ENCODE measurements at regions of chr12 and their contacts with region 1.

Region 1: DNA sequence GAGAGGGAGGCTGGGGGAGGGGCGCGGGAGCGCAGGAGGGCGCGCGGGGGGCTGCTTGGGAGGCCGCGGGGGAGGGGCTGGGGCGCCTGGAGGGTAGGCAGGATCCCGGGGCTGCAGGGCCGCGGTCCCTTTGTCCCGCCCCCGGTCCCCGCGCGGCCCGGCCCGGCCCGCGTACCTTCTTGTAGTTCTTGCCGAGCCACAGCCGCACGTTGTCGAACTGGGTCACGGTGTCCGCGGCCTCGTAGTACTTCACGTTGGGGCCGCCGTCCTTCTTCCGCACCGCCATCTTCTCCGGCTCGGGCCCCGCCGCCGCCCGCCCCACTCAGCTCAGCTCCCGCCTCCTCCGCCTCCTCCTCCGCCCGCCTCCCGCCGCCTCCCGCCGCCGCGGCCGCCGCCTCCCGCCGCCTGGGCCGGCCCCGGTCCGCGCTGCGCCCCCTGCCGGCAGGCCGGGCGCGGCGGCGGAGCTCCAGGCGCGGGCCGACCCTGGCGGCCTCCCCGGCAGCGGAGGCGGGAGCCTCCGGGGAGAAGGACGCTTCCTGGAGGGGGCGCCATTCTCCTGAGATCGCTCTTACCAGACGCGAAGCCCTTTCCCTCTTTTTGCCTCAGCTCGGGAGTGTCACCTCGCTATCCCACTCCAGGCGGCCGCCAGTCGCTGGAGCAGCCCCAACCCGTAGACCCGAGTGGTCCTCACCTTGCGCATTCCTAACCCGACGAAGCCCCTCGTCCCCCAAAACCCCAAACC is at the start of gene SMARCC2:
- DNase-seq: peak; percentile 75 to 92
- H3K4me3 ChIP-seq: peak within 1 kb of the TSS; percentile 82 to 95 (median 90)
- H3K27ac ChIP-seq: peak within 1 kb of the TSS; percentile 81
- H3K4me1 ChIP-seq: peaks cover 2 to 8% (median 4%) of the 10 kb centered on the region in 4 experiments; a peak in 3 of 7 replicates
- H3K27me3 ChIP-seq: no peaks in the 10 kb centered on the region
- CTCF ChIP-seq: peak; percentile 75 to 96 (median 84)
- EP300 ChIP-seq: peak in 1 of 2 experiments; percentile 26; a peak in 1 of 3 replicates
- POLR2A ChIP-seq: peak; percentile 24 to 65
- RAD21 ChIP-seq: peak; percentile 26 to 48; a peak in 3 of 4 replicates
- total RNA-seq, gene SMARCC2: 66.3 and 78.5 TPM in 2 replicates

Region 2: GRCh38 chr12:56104109-56104814 is 85.1 kb before region 1 on chr12 and contains the start of gene PA2G4:
- CTCF ChIA-PET with region 1: interaction called, 9 read pairs
- POLR2A ChIA-PET with region 1: interaction called, 20 read pairs
- DNase-seq: peak; percentile 95 to 99
- H3K4me3 ChIP-seq: peak within 1 kb of the TSS; percentile 81 to 95 (median 92)
- H3K27ac ChIP-seq: peak within 1 kb of the TSS; percentile 88; the same call in 1 of the 2 replicates
- H3K4me1 ChIP-seq: peaks cover 0 to 9% (median 3%) of the 10 kb centered on the region in 4 experiments; a peak in 5 of 7 replicates
- H3K27me3 ChIP-seq: no peaks in the 10 kb centered on the region
- CTCF ChIP-seq: no peak
- EP300 ChIP-seq: no peak
- POLR2A ChIP-seq: peak; percentile 69 to 70; a peak in 2 of 3 replicates
- RAD21 ChIP-seq: no peak
- total RNA-seq, gene PA2G4: 237 and 242 TPM in 2 replicates

Region 3: GRCh38 chr12:56178347-56178746 is 11.0 kb before region 1 on chr12:
- CTCF ChIA-PET with region 1: interaction called, 11 read pairs
- POLR2A ChIA-PET with region 1: interaction called, 189 read pairs
- DNase-seq: no peak
- H3K4me3 ChIP-seq: no peak overlapping the region
- H3K27ac ChIP-seq: no peak overlapping the region
- H3K4me1 ChIP-seq: no peaks in the 10 kb centered on the region
- H3K27me3 ChIP-seq: no peaks in the 10 kb centered on the region
- CTCF ChIP-seq: no peak
- EP300 ChIP-seq: no peak
- POLR2A ChIP-seq: no peak; a peak in 1 of 3 replicates
- RAD21 ChIP-seq: no peak

Region 4: GRCh38 chr12:56230432-56231183 is 41.3 kb after region 1 on chr12:
- CTCF ChIA-PET with region 1: interaction called, 6 read pairs
- POLR2A ChIA-PET with region 1: interaction called, 11 read pairs
- DNase-seq: no peak
- H3K4me3 ChIP-seq: no peak overlapping the region
- H3K27ac ChIP-seq: no peak overlapping the region
- H3K4me1 ChIP-seq: peaks cover 0 to 6% (median 0%) of the 10 kb centered on the region in 4 experiments; a peak in 3 of 7 replicates
- H3K27me3 ChIP-seq: no peaks in the 10 kb centered on the region
- CTCF ChIP-seq: no peak
- EP300 ChIP-seq: no peak
- POLR2A ChIP-seq: no peak
- RAD21 ChIP-seq: no peak

Region 5: DNA sequence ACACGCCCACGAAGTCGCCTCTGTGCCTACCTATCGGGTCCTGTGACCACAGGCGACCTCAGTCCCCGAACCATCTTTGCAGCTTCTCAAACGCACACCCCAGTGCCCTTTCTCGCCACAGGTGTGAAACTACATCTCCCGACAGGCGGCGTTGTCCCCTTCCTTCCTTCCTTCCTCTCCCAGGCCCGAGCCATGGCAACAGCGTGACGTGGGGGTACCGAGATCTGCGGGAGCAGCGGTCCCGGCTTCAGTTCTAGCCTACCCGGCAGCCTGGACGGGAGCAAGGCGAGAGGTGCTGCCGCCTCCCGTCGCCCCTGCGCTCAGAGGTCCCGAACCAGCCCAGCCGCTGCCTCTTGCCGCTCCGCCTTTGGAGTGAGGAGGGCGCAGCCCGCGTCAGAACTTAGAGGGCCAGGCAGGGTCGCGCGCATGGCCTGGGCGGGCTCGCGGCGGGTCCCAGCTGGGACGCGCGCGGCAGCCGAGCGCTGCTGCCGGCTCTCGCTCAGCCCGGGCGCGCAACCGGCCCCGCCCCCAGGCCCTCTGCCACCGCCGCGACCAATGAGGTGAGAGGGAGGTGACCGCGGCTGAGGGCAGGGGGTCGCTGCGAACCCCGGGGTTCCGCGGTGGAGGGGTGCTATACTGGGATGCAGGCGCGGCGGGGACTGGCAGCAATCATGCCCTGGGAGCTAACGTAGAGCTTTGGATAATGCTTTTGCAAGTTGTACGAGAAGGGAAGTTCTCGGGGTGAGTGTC is 77.5 kb after region 1 on chr12 and contains the start of gene COQ10A:
- CTCF ChIA-PET with region 1: interaction called, 8 read pairs
- POLR2A ChIA-PET with region 1: interaction called, 24 read pairs
- DNase-seq: peak; percentile 51 to 95
- H3K4me3 ChIP-seq: peak within 1 kb of the TSS; percentile 82 to 88 (median 87)
- H3K27ac ChIP-seq: peak within 1 kb of the TSS; percentile 84
- H3K4me1 ChIP-seq: peaks cover 0 to 9% (median 3%) of the 10 kb centered on the region in 4 experiments; a peak in 4 of 7 replicates
- H3K27me3 ChIP-seq: no peaks in the 10 kb centered on the region
- CTCF ChIP-seq: peak; percentile 41 to 71 (median 70)
- EP300 ChIP-seq: no peak
- POLR2A ChIP-seq: peak; percentile 51 to 85
- RAD21 ChIP-seq: peak in 1 of 2 experiments; percentile 1; a peak in 1 of 4 replicates
- total RNA-seq, gene COQ10A: 21.8 and 22.8 TPM in 2 replicates

Region 6: GRCh38 chr12:56280849-56281248 is 91.5 kb after region 1 on chr12:
- CTCF ChIA-PET with region 1: no interaction called
- POLR2A ChIA-PET with region 1: no interaction called
- DNase-seq: no peak
- H3K4me3 ChIP-seq: no peak overlapping the region
- H3K27ac ChIP-seq: no peak overlapping the region
- H3K4me1 ChIP-seq: no peaks in the 10 kb centered on the region
- H3K27me3 ChIP-seq: no peaks in the 10 kb centered on the region
- CTCF ChIP-seq: no peak
- EP300 ChIP-seq: no peak
- POLR2A ChIP-seq: no peak
- RAD21 ChIP-seq: no peak

Measured in H1 (cell line).